T-cell (primary cell): ENCODE measurements at regions of chr3 and their contacts with region 1.

Region 1: DNA sequence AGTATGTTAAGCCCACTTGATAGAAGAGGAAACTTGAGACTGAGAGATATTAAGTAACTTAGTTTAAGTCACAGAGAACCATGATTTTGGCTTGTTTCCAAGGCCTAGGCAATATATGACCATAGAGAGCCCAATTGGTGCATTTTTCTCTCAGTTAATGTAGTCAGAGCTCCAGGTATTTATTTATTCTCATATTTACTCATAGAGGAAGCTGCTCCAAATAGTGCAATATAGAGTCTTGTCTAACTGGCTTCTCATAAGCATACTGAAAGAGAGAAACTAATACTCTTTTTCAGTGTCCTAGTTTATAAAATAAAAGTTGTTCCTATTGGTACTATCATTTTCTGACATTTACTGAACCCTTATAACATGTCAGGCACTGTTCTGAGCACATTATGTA is 15.2 kb downstream of the TRNT1 start:
- DNase-seq: no peak
- ATAC-seq: no peak
- H3K4me3 ChIP-seq: no peak overlapping the region
- H3K4me3 Mint-ChIP-seq: no peak overlapping the region
- H3K27ac ChIP-seq: no peak overlapping the region
- H3K27ac Mint-ChIP-seq: peak overlapping the region; percentile 12 to 20
- H3K4me1 ChIP-seq: no peaks in the 10 kb centered on the region
- H3K4me1 Mint-ChIP-seq: peaks cover 20 to 27% (median 22%) of the 10 kb centered on the region in 3 donors
- H3K27me3 ChIP-seq: no peaks in the 10 kb centered on the region
- H3K27me3 Mint-ChIP-seq: no peaks in the 10 kb centered on the region

Region 2: GRCh38 chr3:3170998-3171397 is 29.1 kb after region 1 on chr3:
- CTCF ChIA-PET with region 1: interaction called, 3 to 5 read pairs
- POLR2A ChIA-PET with region 1: interaction called, 4 to 12 read pairs
- DNase-seq: peak in 1 of 35 experiments; percentile 67
- ATAC-seq: peak in 2 of 4 experiments; percentile 38 to 51
- H3K4me3 ChIP-seq: no peak overlapping the region
- H3K4me3 Mint-ChIP-seq: peak overlapping the region; percentile 17 to 55 (median 28)
- H3K27ac ChIP-seq: peak overlapping the region; percentile 94
- H3K27ac Mint-ChIP-seq: peak overlapping the region; percentile 95 to 97
- H3K4me1 ChIP-seq: peaks cover 47 to 57% of the 10 kb centered on the region in 2 experiments
- H3K4me1 Mint-ChIP-seq: peaks cover 71 to 80% (median 78%) of the 10 kb centered on the region in 3 donors
- H3K27me3 ChIP-seq: no peaks in the 10 kb centered on the region
- H3K27me3 Mint-ChIP-seq: no peaks in the 10 kb centered on the region